AG04449 (cell line): ENCODE measurements at regions of chr10 and their contacts with region 1.

Region 1: DNA sequence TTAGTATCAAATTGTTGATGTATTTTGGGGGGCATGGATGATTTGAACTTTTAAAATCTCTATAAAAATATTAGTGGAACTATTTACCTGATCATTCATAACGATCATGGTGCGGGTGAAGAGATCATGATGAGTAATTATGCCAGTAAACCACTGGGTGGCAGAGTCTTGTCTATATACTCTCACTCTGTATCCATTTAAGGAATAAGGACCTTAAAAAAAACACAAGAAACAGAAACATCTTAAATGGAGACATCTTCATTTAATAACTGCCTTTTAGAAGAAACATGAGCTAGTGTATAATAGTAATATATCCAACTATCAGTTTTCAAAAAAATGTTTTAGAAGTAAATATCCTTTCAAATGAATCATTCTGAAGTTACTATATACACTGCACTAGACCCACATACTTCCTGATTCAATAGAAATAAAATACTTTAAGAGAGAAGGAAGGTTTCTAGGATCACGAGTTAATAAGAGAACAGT is 84.0 kb downstream of the NRBF2 start:
- DNase-seq: no peak
- H3K4me3 ChIP-seq: no peak overlapping the region
- CTCF ChIP-seq: peak; percentile 42

Region 2: DNA sequence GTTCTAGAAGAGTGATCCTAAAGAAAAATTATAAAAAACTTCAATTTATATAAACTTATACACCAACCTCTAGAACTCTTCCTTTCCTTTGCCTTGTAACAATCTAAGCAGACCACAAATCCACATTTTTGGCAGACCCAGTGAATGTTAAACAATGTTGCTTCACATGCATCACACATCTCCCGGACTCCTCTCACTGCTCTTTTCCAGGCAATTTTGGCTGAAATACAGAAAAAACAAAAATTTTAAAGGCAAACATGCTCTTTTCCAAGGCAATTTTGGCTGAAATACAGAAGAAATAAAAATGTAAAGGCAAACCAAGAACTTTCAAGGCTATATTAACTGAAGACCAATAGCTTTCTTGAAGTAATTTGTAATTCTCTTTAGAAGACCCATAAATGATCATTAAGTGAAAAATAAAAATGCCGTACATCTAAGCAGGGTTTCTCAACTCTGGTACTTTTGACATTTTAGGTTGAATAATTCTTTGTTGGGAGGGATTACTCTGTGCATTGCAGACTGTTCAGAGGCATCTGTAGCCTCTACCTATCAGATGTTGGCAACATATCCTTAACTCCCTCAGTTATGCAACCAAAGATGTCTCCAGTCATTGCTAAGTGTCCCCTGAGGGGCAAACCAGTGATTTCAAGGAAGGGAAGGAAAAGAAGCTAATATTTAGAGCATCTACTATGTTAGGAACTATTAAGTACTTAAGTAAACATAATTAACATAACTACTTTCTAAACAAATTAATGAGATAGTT is 19.6 kb before region 1 on chr10:
- CTCF ChIA-PET with region 1: interaction called, 16 read pairs
- POLR2A ChIA-PET with region 1: no interaction called
- DNase-seq: peak; percentile 70
- H3K4me3 ChIP-seq: no peak overlapping the region
- CTCF ChIP-seq: no peak

Region 3: GRCh38 chr10:63227207-63227915 is 10.2 kb after region 1 on chr10:
- CTCF ChIA-PET with region 1: interaction called, 25 read pairs
- POLR2A ChIA-PET with region 1: no interaction called
- DNase-seq: no peak
- H3K4me3 ChIP-seq: no peak overlapping the region
- CTCF ChIP-seq: no peak

Region 4: DNA sequence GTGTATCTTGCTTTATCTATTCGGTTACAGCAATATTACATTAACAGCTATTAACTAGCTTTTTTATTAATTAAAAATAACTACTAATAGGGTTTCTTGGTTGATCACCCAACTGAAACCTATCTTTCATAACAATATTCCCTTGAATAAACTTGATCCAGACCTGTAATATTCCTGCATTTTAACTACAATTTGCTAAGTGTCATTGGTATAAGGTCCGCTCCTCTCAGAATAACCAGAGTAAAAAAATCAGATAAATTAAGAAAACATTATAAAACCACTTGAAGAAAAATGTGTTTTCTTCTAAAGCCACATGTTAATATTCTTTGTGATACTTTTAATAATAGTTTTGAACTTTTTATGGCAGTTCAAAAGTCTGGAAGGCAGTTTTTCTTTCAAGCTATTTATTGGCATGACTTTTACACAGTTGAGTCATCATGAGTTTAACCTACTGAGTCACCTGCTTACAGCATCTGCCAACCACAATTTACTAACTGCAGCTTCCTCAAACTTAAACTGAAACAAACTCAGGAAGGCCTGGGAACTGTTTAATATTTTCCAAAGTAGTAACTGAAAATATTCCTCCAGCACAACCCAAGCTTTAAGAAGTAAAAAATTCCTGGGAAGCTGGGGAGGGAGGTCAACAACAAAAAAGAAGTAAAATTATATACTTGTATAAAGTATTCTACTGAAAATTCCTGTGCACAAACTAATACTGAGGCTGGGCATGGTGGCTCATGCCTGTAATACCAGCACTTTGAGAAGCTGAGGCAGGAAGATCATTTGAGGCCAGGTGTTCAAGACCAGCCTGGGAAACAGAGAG is 19.2 kb after region 1 on chr10:
- CTCF ChIA-PET with region 1: interaction called, 15 read pairs
- POLR2A ChIA-PET with region 1: no interaction called
- DNase-seq: peak; percentile 72
- H3K4me3 ChIP-seq: no peak overlapping the region
- CTCF ChIP-seq: no peak